K562 (cell line): ENCODE measurements at regions of chr2 and their contacts with region 1.

Region 1: GRCh38 chr2:27281855-27282559 is at the start of gene TRIM54:
- DNase-seq: no peak
- ATAC-seq: peak; percentile 37; the same call in 1 of the 3 replicates
- H3K4me3 ChIP-seq: no peak within 1 kb of the TSS
- H3K27ac ChIP-seq: no peak within 1 kb of the TSS
- H3K4me1 ChIP-seq: peaks cover 6 to 17% of the 10 kb centered on the region in 2 experiments
- H3K27me3 ChIP-seq: peaks cover 0 to 4% of the 10 kb centered on the region in 2 experiments; a peak in 1 of 5 replicates
- CTCF ChIP-seq: no peak
- EP300 ChIP-seq: no peak
- POLR2A ChIP-seq: no peak
- RAD21 ChIP-seq: no peak
- polyA plus RNA-seq, gene TRIM54: not detected

Region 2: DNA sequence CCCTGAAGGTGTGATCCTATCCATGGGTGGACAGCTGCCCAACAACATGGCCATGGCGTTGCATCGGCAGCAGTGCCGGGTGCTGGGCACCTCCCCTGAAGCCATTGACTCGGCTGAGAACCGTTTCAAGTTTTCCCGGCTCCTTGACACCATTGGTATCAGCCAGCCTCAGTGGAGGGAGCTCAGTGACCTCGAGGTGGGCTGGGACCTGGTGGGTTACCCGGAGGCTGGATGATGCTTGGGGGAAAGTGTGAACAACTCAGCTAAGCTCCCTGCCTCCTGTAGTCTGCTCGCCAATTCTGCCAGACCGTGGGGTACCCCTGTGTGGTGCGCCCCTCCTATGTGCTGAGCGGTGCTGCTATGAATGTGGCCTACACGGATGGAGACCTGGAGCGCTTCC is 48.7 kb before region 1 on chr2:
- CTCF ChIA-PET with region 1: no interaction called
- POLR2A ChIA-PET with region 1: no interaction called
- in situ Hi-C with region 1: loop called (anchors 5 kb)
- intact Hi-C with region 1: no loop called
- DNase-seq: no peak
- ATAC-seq: no peak
- H3K4me3 ChIP-seq: no peak overlapping the region
- H3K27ac ChIP-seq: no peak overlapping the region
- H3K4me1 ChIP-seq: no peaks in the 10 kb centered on the region
- H3K27me3 ChIP-seq: no peaks in the 10 kb centered on the region
- CTCF ChIP-seq: no peak
- EP300 ChIP-seq: no peak
- POLR2A ChIP-seq: no peak
- RAD21 ChIP-seq: no peak

Region 3: GRCh38 chr2:27249891-27250651 is 31.9 kb before region 1 on chr2:
- CTCF ChIA-PET with region 1: interaction called, 18 read pairs
- POLR2A ChIA-PET with region 1: interaction called, 3 read pairs
- in situ Hi-C with region 1: no loop called
- intact Hi-C with region 1: loop called (anchors 1 kb)
- DNase-seq: peak; percentile 84 to 91 (median 88)
- ATAC-seq: peak; percentile 96
- H3K4me3 ChIP-seq: no peak overlapping the region
- H3K27ac ChIP-seq: peak overlapping the region; percentile 56; the same call in 2 of the 3 replicates
- H3K4me1 ChIP-seq: peaks cover 9 to 23% of the 10 kb centered on the region in 2 experiments
- H3K27me3 ChIP-seq: no peaks in the 10 kb centered on the region
- CTCF ChIP-seq: peak; percentile 96 to 98 (median 97)
- EP300 ChIP-seq: 0 out of 2 replicates have a peak, but pooled peaks have one; percentile 13
- POLR2A ChIP-seq: no peak
- RAD21 ChIP-seq: peak; percentile 98 to 99